HepG2 (cell line): ENCODE measurements at regions of chr17 and their contacts with region 1.

Region 1: DNA sequence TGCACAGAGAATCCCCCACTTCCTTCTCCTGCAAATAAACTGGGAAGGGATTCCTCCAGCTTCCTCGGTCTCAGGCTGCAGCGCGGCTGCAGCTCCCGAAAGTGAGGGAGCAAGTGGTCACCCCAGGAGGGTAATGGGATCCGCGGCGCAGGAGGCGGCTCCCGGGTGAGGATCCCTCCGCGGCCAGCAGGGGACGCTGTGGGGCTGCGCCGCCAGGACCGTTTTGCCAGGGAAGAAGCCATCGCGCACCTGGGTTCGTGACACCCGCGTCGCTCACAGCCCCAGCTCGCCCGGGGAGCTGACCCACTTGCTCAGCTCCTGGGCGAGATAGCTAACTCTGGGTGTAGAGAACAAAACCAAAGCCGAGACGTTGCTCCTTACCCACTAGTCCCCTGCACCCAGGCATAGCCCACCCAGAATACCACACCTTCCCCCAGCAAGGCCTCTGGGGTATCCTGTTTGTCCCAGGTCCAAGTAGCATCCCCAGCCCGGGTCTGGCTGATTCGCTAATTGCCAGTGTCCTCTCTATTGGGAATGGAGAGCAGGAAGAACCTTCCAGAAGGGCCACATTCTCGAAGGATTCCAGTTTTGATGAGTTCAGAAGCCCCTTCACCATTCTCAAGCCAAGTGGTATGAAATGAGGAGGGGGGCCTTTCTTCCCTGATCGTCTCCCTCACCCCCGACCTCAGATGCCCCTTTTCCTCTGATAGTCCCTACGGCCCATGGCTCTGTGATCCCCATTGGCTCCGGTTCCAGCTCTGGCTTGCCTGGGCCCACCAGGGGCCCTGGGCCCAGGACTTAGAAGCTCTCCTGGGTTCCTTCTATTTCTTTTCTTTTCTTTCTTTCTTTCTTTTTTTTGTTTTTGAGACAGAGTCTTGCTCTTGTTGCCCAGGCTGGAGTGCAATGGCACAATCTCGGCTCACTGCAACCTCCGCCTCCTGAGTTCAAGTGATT is 14.1 kb downstream of the CYGB start:
- DNase-seq: peak; percentile 53
- ATAC-seq: peak; percentile 58
- H3K4me3 ChIP-seq: peak overlapping the region in 1 of 3 experiments; percentile 64; a peak in 2 of 6 replicates
- H3K27ac ChIP-seq: no peak overlapping the region
- H3K4me1 ChIP-seq: peaks cover 85% of the 10 kb centered on the region
- H3K27me3 ChIP-seq: peaks cover 8 to 32% of the 10 kb centered on the region in 2 experiments
- CTCF ChIP-seq: peak; percentile 100
- EP300 ChIP-seq: no peak; a peak in 1 of 4 replicates
- POLR2A ChIP-seq: no peak
- RAD21 ChIP-seq: peak; percentile 100

Region 2: GRCh38 chr17:76540381-76541300 is 17.3 kb after region 1 on chr17:
- CTCF ChIA-PET with region 1: interaction called, 86 read pairs
- POLR2A ChIA-PET with region 1: interaction called, 44 read pairs
- in situ Hi-C with region 1: no loop called
- intact Hi-C with region 1: no loop called
- DNase-seq: peak; percentile 73
- ATAC-seq: peak; percentile 66
- H3K4me3 ChIP-seq: no peak overlapping the region
- H3K27ac ChIP-seq: no peak overlapping the region
- H3K4me1 ChIP-seq: peaks cover 10% of the 10 kb centered on the region
- H3K27me3 ChIP-seq: no peaks in the 10 kb centered on the region
- CTCF ChIP-seq: no peak
- EP300 ChIP-seq: no peak
- POLR2A ChIP-seq: peak in 1 of 2 experiments; percentile 28; a peak in 1 of 4 replicates
- RAD21 ChIP-seq: no peak

Region 3: DNA sequence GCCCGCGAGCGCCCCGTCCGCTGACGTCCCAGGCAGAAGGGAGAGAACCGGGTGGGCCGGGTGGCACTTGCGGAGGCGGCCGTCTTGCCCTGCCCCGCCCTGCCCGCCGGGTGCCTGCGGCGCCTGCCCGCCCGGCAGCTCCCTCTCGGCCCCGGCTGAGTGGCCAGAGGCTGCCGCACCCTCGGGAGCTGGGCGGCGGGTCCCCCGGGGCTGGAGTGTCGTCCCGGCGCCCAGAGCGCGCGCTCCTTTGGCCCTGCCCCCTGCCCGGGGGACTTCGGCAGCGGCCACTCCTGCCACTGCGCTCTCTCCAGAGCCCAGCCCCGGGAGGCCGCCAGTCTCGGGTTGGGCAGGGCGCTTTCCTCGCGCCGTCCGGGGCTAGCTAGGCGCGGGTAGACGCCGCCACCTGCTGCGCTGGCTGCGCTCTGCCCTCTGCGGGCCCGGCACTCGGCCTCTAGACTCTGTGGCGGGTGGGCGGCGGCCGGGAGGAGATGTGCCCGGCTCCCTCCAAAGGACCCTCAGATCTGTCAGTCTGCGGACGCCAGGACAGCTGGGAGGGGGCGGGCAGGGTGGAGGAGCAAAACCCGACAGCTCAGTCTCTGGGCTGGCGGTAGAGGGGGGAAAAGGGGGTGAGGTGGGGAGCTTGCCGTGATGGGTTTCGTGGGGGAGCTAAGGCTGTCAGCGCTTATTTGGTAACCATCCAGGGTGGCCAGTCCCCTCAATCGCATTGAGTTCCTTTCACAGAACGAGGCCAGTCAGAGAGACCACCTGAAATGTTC is 62.6 kb after region 1 on chr17 and contains the start of gene ST6GALNAC2:
- CTCF ChIA-PET with region 1: interaction called, 5 read pairs
- POLR2A ChIA-PET with region 1: no interaction called
- in situ Hi-C with region 1: no loop called
- intact Hi-C with region 1: loop called (anchors 2 kb)
- DNase-seq: peak; percentile 66
- ATAC-seq: peak; percentile 93
- H3K4me3 ChIP-seq: peak within 1 kb of the TSS; percentile 55 to 72 (median 58)
- H3K27ac ChIP-seq: no peak within 1 kb of the TSS
- H3K4me1 ChIP-seq: peaks cover 53% of the 10 kb centered on the region
- H3K27me3 ChIP-seq: peaks cover 11 to 40% of the 10 kb centered on the region in 2 experiments; a peak in 4 of 5 replicates
- CTCF ChIP-seq: peak; percentile 90
- EP300 ChIP-seq: no peak
- POLR2A ChIP-seq: no peak
- RAD21 ChIP-seq: peak; percentile 98
- total RNA-seq, gene ST6GALNAC2: 0.49 and 0.84 TPM in 2 replicates